ENCODE measurements at regions of chr18 and their contacts with region 1.

Region 1: GRCh38 chr18:29874519-29875098 is 1167.9 kb downstream of the DSC3 start:
- DNase-seq: peak; percentile 64
- H3K4me3 ChIP-seq: no peak overlapping the region
- H3K27ac ChIP-seq: no peak overlapping the region
- H3K4me1 ChIP-seq: no peaks in the 10 kb centered on the region
- H3K27me3 ChIP-seq: no peaks in the 10 kb centered on the region
- CTCF ChIP-seq: peak; percentile 63

Region 2: GRCh38 chr18:30132958-30133357 is 258.3 kb after region 1 on chr18:
- CTCF ChIA-PET with region 1: no interaction called
- POLR2A ChIA-PET with region 1: no interaction called
- intact Hi-C with region 1: no loop called
- DNase-seq: no peak
- H3K4me3 ChIP-seq: no peak overlapping the region
- H3K27ac ChIP-seq: no peak overlapping the region
- H3K4me1 ChIP-seq: no peaks in the 10 kb centered on the region
- H3K27me3 ChIP-seq: no peaks in the 10 kb centered on the region
- CTCF ChIP-seq: no peak

Region 3: DNA sequence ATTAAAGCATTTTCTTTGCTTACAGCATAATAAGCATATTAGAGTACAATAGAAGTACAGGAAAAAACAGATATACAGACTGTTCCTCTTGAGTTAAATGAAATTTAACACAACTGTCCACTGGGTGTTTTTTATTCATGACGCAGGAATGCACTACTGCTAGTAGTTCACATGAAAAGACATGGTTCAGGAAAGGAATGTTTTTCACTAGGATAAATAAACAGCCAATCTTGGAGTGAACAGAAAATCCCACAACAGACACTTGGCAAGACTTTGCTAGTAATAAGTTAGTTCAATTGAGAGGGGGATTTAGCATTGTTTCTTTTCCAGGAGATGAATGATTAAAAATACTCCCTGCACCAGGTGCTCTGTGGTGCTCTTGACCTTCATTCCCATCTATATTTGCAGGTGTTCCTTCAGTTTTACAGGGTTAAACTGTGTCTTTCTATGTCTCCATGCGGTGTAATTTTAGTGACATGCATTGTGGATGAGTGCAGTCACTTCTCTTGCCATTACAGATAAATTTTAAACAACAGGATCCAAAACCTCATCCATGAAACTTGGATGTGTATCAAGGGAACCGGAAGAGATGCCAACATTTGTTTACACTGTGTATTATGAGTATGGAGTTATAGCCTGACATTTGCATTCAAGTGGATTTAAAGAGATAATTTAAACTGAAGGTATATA is 371.3 kb after region 1 on chr18:
- CTCF ChIA-PET with region 1: no interaction called
- POLR2A ChIA-PET with region 1: no interaction called
- intact Hi-C with region 1: no loop called
- DNase-seq: no peak
- H3K4me3 ChIP-seq: no peak overlapping the region
- H3K27ac ChIP-seq: no peak overlapping the region
- H3K4me1 ChIP-seq: no peaks in the 10 kb centered on the region
- H3K27me3 ChIP-seq: no peaks in the 10 kb centered on the region
- CTCF ChIP-seq: no peak

Region 4: GRCh38 chr18:30280880-30281470 is 406.4 kb after region 1 on chr18:
- CTCF ChIA-PET with region 1: no interaction called
- POLR2A ChIA-PET with region 1: no interaction called
- intact Hi-C with region 1: loop called (anchors 2 kb)
- DNase-seq: peak; percentile 75
- H3K4me3 ChIP-seq: no peak overlapping the region
- H3K27ac ChIP-seq: no peak overlapping the region
- H3K4me1 ChIP-seq: no peaks in the 10 kb centered on the region
- H3K27me3 ChIP-seq: no peaks in the 10 kb centered on the region
- CTCF ChIP-seq: peak; percentile 74

Region 5: DNA sequence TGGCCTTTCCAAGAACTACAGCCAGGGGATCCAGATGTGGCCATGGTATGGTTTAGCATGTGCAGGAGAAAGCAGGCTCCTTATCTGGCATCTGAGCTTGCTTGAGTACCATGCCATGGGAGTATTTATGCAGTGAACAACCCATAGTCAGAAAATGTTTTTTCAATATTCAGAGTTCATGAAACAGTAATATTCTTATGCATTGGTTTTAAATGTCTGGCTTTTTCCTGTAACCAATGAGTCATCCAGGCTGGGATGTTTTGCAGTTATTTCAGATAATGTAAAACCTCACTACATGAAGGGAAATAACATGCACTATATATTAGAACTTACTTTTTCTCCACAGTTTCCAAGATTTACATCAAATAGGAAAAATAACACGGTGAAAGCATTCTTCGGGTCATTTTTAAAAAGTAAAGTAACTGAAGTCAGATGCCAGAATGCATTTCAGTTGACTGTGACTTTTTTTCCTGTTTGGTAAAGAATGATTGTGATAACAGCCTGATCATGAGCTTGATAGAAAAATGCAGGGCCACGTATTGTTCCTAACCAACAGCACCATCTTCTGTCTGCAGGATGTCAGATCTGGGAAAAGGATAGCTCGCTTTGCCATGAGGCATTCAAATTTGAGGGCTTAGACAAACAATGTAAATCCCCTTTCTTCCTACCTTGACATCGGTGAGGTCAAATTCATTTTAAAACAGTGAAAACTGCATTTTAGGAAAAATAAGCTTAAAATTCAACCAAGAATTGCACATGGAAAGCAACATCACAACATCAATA is 1015.1 kb after region 1 on chr18:
- CTCF ChIA-PET with region 1: no interaction called
- POLR2A ChIA-PET with region 1: no interaction called
- intact Hi-C with region 1: loop called (anchors 10 kb)
- DNase-seq: peak; percentile 11
- H3K4me3 ChIP-seq: no peak overlapping the region
- H3K27ac ChIP-seq: no peak overlapping the region
- H3K4me1 ChIP-seq: no peaks in the 10 kb centered on the region
- H3K27me3 ChIP-seq: peaks cover 6% of the 10 kb centered on the region
- CTCF ChIP-seq: 0 out of 2 replicates have a peak, but pooled peaks have one; percentile 21

Region 6: GRCh38 chr18:30971338-30971956 is 1096.8 kb after region 1 on chr18:
- CTCF ChIA-PET with region 1: no interaction called
- POLR2A ChIA-PET with region 1: no interaction called
- intact Hi-C with region 1: loop called (anchors 5 kb)
- DNase-seq: peak; percentile 50
- H3K4me3 ChIP-seq: no peak overlapping the region
- H3K27ac ChIP-seq: no peak overlapping the region
- H3K4me1 ChIP-seq: no peaks in the 10 kb centered on the region
- H3K27me3 ChIP-seq: no peaks in the 10 kb centered on the region
- CTCF ChIP-seq: peak; percentile 61

Measured in A673 (cell line).